ENCODE measurements at regions of chr5 and their contacts with region 1.

Region 1: GRCh38 chr5:68272289-68272688 is 56.7 kb downstream of the PIK3R1 start:
- DNase-seq: no peak
- H3K4me3 Mint-ChIP-seq: no peak overlapping the region
- H3K27ac Mint-ChIP-seq: no peak overlapping the region
- H3K4me1 Mint-ChIP-seq: peaks cover 86% of the 10 kb centered on the region
- H3K27me3 Mint-ChIP-seq: no peaks in the 10 kb centered on the region

Region 2: GRCh38 chr5:67165526-67166459 is 1106.5 kb before region 1 on chr5:
- intact Hi-C with region 1: loop called (anchors 5 kb)
- DNase-seq: peak; percentile 82
- H3K4me3 Mint-ChIP-seq: peak overlapping the region; percentile 84
- H3K27ac Mint-ChIP-seq: peak overlapping the region; percentile 93
- H3K4me1 Mint-ChIP-seq: peaks cover 49% of the 10 kb centered on the region
- H3K27me3 Mint-ChIP-seq: no peaks in the 10 kb centered on the region

Region 3: DNA sequence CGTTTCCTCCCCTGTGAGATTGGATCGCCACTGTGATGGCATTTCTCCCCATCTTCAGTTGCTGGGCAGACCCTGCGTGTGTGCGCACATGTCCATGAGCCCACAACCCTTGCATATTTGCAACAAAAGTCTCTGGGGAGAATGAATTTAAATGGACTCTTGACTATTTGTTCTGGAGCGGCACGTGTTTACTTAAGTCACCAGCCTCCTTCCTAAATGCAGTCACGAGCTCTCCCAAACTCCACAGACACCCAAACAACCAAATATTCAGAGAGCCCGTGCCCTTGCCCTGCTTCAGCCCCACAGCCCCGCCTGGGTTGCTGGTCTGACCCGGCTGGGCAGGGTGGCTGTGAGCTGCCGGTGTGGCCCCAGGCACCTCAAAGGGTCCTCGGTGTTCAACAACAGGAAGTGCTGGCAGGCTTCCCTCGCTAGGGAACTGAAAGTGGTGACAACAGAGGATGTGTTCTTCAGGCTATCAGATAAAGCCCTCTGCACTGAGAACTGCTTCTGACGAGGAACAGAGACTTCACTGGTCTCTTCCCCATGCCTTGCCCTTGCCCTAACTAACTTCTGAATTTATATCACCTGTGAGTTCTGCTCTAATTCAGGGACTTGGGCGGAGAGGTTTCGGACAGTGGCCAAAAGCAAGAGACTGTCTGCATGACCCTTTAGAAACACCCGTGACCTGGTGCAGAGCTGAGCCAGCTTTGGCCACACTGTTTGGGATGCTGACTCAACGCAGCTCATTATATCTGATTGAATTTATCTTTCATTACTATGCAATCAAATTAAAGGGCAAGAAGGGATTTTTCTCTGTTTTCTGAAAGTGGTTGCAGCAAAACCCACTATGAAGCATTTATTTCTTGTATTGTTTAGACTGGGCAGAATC is 1056.5 kb before region 1 on chr5:
- intact Hi-C with region 1: loop called (anchors 1 kb)
- DNase-seq: peak; percentile 75
- H3K4me3 Mint-ChIP-seq: peak overlapping the region; percentile 73
- H3K27ac Mint-ChIP-seq: peak overlapping the region; percentile 97
- H3K4me1 Mint-ChIP-seq: peaks cover 55% of the 10 kb centered on the region
- H3K27me3 Mint-ChIP-seq: no peaks in the 10 kb centered on the region

Region 4: GRCh38 chr5:68239487-68239886 is 32.8 kb before region 1 on chr5:
- intact Hi-C with region 1: loop called (anchors 1 kb)
- DNase-seq: peak; percentile 64
- H3K4me3 Mint-ChIP-seq: peak overlapping the region; percentile 15
- H3K27ac Mint-ChIP-seq: peak overlapping the region; percentile 75
- H3K4me1 Mint-ChIP-seq: peaks cover 56% of the 10 kb centered on the region
- H3K27me3 Mint-ChIP-seq: no peaks in the 10 kb centered on the region

Region 5: GRCh38 chr5:68261569-68262065 is 10.7 kb before region 1 on chr5:
- intact Hi-C with region 1: loop called (anchors 2 kb)
- DNase-seq: no peak
- H3K4me3 Mint-ChIP-seq: no peak overlapping the region
- H3K27ac Mint-ChIP-seq: no peak overlapping the region
- H3K4me1 Mint-ChIP-seq: peaks cover 73% of the 10 kb centered on the region
- H3K27me3 Mint-ChIP-seq: no peaks in the 10 kb centered on the region

Region 6: DNA sequence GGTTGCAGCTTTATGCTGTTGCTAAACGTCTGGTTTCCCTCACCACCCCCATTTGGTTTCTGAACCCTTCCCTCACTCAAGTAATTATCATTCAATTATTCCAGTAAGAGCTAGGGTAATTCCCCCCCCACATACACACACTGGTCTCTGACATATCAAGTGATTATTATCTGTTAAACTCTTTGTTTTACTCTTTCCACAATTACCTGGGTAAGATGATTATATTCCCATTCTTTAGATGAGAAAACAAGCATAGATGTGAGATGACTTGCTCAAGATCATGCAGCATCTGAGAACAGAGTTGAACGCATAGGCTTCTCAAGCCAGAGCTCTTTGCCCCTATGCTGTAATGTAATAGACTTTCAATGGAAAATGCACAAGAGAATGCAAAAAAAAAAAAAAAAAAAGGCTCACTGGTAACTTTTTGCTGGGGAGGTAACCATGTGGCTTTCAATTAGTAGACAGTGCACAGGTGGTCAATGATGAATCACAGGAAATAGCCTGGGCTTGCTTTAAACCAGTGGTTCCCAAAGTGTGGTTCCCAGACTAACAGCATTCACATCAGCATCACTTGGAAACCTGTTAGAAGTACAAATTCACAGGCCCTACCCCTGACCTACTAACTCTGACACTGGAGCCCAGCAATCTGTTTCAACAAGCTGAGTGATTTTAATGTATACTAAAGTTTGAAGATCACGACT is 30.9 kb after region 1 on chr5:
- intact Hi-C with region 1: loop called (anchors 1 kb)
- DNase-seq: no peak
- H3K4me3 Mint-ChIP-seq: no peak overlapping the region
- H3K27ac Mint-ChIP-seq: peak overlapping the region; percentile 74
- H3K4me1 Mint-ChIP-seq: peaks cover 55% of the 10 kb centered on the region
- H3K27me3 Mint-ChIP-seq: peaks cover 4% of the 10 kb centered on the region

Region 7: DNA sequence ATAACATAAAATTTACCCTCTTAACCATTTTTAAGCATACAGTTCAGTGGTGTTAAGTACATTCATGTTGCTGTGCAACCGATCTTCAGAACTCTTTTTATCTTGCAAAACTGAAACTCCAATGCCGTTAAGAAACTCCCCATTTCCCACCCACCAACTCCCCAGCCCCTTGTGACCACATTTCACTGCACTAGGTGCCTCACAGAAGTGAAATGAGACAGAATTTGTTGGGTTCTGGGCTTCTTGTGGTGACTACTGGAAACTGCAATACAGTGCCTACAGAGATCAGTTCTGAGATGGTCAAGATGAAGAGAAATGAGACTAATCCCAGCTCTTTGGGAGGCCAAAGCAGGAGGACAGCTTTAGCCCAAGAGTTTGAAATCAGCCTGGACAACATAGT is 619.4 kb after region 1 on chr5:
- intact Hi-C with region 1: loop called (anchors 1 kb)
- DNase-seq: peak; percentile 48
- H3K4me3 Mint-ChIP-seq: no peak overlapping the region
- H3K27ac Mint-ChIP-seq: peak overlapping the region; percentile 39
- H3K4me1 Mint-ChIP-seq: peaks cover 65% of the 10 kb centered on the region
- H3K27me3 Mint-ChIP-seq: no peaks in the 10 kb centered on the region

Measured in activated T-helper 2 cell treated with anti-CD3 and anti-CD28 coated beads, Interferon-gamma antibody, Interleukin-2, Interleukin-4, amounts not matched to agents 10 μg/mL and 5 μg/mL and 100 μg/mL, durations not matched to agents 14 hours and 24 hours and 36 hours (primary cell).